Activated CD4-positive, alpha-beta memory T cell treated with anti-CD3 and anti-CD28 coated beads, Interleukin-2, amount 10 ng/mL, durations not matched to agents 7 days and 5 days (primary cell): ENCODE measurements at regions of chr19 and their contacts with region 1.

Region 1: GRCh38 chr19:57191141-57192076 is at the start of gene ZNF264:
- DNase-seq: peak; percentile 90
- H3K4me3 Mint-ChIP-seq: peak within 1 kb of the TSS; percentile 88
- H3K27ac Mint-ChIP-seq: peak within 1 kb of the TSS; percentile 80
- H3K4me1 Mint-ChIP-seq: peaks cover 29% of the 10 kb centered on the region
- H3K27me3 Mint-ChIP-seq: peaks cover 4% of the 10 kb centered on the region
- total RNA-seq, gene ZNF264: 39.4 to 41.3 TPM

Region 2: DNA sequence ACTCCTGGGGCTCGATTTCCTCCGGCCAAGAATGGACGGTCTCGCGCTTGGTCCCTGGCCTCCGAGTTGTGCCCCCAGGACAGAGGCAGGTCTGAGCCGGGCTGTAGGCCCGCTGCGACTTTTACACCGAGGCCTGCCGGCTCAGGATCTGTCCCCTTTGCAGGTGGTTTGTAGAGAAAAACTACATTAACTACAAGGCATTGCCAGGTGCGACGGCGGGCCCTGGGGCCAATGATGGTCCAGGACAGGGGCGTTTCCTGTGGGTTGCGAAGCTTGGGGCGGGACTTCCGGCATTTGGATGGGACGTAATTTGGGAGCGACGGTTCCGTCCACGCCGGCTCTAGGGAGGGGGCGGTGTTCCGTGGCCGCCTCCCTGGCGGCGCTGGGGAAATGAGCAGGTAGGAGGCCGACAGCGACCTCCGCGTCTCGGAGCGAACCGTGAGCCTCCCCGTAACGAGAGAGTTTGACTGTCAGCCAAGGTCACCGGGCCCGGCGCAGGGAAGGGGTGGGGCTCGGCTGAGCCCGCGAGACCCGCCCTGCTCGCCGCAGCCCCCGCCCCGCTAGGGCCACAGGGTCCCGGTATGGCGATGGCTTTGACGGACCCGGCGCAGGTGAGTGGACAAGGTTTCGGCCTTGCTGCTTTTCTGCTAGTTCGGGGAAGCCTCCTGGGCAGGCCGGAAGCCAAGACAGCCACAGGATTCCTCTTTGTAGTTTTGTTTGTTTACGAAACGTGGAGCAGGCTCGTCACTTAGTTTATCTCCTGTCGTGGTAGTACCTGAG is 49.1 kb after region 1 on chr19 and contains the start of gene ZNF805:
- CTCF ChIA-PET with region 1: no interaction called
- POLR2A ChIA-PET with region 1: interaction called, 14 read pairs
- DNase-seq: peak; percentile 96
- H3K4me3 Mint-ChIP-seq: peak within 1 kb of the TSS; percentile 83
- H3K27ac Mint-ChIP-seq: peak within 1 kb of the TSS; percentile 93
- H3K4me1 Mint-ChIP-seq: peaks cover 25% of the 10 kb centered on the region
- H3K27me3 Mint-ChIP-seq: no peaks in the 10 kb centered on the region
- total RNA-seq, gene ZNF805: 9.8 to 10.0 TPM

Region 3: DNA sequence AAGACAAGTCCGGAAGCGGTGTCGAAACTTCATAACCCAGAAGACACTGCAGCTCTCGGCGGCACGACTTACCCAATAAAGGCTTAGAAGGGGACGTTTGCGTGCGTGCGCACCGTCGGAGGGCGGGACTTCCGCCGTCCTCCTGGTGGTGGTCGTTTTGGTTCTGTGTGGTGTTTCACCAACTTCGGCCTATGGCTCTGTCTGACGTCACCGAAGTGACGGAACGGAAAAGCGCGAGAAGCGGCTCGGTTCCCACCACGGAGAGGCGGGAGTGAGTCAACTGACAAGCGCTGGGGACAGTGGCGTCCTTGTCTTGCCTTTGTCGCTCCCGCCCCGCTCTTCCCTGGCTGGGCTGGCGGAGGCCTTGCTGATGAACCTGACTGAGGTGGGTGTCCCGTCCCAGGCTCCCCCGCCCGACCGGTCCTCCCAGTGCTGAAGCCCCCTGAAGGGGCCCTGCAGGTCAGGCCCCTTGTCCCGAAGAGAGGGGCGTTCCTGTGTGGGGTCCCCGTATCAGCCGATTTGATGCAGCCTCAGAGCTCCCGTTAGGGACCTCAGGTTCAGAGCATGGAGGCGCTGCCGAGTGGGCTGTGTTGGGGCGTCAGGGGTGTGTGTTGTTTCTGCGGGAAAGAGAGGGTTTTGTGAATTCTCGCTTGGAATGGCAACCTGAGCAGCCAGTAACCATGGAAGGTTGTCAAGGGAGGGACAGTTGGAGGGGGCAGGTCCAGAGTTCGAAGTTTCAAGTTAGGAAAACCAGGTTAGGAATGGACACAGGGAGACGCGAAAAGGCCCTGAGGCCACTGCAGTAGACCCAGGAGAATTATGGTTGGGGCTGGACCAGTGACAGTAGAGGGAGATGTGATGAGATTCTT is 198.6 kb after region 1 on chr19 and contains the start of gene ZNF548:
- CTCF ChIA-PET with region 1: no interaction called
- POLR2A ChIA-PET with region 1: interaction called, 12 read pairs
- DNase-seq: peak; percentile 95
- H3K4me3 Mint-ChIP-seq: peak within 1 kb of the TSS; percentile 98
- H3K27ac Mint-ChIP-seq: peak within 1 kb of the TSS; percentile 87
- H3K4me1 Mint-ChIP-seq: peaks cover 43% of the 10 kb centered on the region
- H3K27me3 Mint-ChIP-seq: no peaks in the 10 kb centered on the region
- total RNA-seq, gene ZNF548: 26.9 to 32.6 TPM